ENCODE measurements at regions of chr3 and their contacts with region 1.

Region 1: DNA sequence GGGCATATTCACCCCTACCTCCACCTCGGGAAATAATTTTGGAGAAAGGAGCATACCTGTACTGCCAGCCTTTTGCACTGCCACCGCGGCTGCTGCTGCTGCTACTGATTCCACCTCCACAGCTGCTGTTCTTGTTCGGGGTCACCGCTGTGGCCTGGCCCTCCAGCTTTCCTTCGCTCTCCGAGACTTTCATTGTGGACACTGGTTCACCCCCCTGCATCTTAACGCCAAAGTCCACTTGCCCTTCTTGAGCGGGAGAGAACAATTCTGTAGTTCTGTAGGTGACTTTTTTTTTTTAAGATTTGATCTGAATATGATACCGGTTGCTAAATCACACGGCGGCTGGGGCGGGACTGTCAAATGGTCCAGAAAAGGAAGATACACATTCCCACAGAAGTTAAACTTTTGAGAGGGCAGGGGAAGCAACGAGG is 701 bp downstream of the OSBPL11 start:
- DNase-seq: peak in 1 of 2 experiments; percentile 42
- H3K4me3 ChIP-seq: peak overlapping the region; percentile 83
- H3K27ac ChIP-seq: peak overlapping the region; percentile 85
- H3K4me1 ChIP-seq: peaks cover 38% of the 10 kb centered on the region; the same call in 1 of the 2 replicates
- H3K27me3 ChIP-seq: no peaks in the 10 kb centered on the region
- CTCF ChIP-seq: no peak

Region 2: DNA sequence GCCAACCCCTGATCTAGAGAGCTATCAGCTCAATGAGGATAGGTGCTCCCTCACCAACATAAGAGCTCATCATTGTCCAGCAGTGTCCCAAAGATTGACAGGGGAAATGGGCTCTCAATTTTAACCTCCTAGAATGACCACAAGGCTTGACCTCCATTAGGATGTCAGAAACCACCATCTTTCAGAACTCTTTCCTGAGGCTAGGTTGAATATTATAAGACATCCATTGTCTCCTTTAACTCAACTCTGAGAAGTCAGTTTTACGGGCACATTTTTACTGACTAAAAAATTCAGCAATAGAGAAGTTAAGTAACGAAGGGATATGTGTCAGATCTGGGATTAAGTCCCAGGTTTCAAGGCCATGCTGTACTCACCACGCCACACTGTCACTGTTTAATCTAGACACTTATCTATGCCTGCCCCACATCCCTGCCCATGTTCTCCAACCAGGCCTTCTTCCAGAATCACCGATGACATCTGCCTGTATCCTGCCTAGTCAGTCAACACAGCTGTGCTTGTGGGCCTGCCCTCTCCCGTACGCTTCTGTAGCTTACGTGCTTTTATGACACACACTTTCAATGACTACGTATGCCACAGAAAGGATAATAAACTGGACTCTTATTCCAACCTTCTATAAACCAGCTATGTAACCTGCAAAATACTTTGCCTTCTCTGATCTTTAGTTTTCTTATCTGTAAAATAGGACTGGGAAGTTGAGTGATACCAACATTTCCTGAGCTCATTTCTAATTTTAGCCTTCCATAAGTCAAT is 642.9 kb before region 1 on chr3:
- CTCF ChIA-PET with region 1: no interaction called
- POLR2A ChIA-PET with region 1: interaction called, 12 read pairs
- intact Hi-C with region 1: no loop called
- DNase-seq: no peak
- H3K4me3 ChIP-seq: no peak overlapping the region
- H3K27ac ChIP-seq: no peak overlapping the region
- H3K4me1 ChIP-seq: no peaks in the 10 kb centered on the region
- H3K27me3 ChIP-seq: no peaks in the 10 kb centered on the region
- CTCF ChIP-seq: no peak

Region 3: DNA sequence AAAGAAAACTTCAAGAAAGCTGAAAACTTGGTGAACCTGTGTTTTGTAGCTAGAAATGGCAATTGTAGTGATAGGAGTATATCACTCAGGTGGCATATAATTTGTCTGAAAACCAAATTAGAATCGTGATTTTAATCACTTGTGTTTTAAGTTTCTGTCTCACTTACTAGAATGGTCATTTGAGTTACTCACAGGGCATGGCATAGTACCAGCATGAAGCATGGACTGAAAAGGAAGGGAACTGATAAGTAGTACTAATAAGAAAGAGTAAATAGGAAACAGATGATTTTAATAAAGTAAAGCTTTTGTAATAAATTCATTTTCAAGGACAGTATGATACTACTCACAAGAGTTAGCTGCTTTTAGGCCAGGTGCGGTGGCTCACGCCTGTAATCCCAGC is 21.4 kb before region 1 on chr3:
- CTCF ChIA-PET with region 1: interaction called, 12 read pairs
- POLR2A ChIA-PET with region 1: no interaction called
- intact Hi-C with region 1: no loop called
- DNase-seq: no peak
- H3K4me3 ChIP-seq: no peak overlapping the region
- H3K27ac ChIP-seq: no peak overlapping the region
- H3K4me1 ChIP-seq: no peaks in the 10 kb centered on the region
- H3K27me3 ChIP-seq: no peaks in the 10 kb centered on the region
- CTCF ChIP-seq: no peak

Region 4: GRCh38 chr3:125651244-125651643 is 56.6 kb after region 1 on chr3:
- CTCF ChIA-PET with region 1: interaction called, 12 read pairs
- POLR2A ChIA-PET with region 1: interaction called, 22 read pairs
- intact Hi-C with region 1: loop called (anchors 1 kb)
- DNase-seq: peak in 1 of 2 experiments; percentile 66
- H3K4me3 ChIP-seq: no peak overlapping the region
- H3K27ac ChIP-seq: peak overlapping the region; percentile 52
- H3K4me1 ChIP-seq: peaks cover 42% of the 10 kb centered on the region
- H3K27me3 ChIP-seq: no peaks in the 10 kb centered on the region
- CTCF ChIP-seq: no peak

Region 5: DNA sequence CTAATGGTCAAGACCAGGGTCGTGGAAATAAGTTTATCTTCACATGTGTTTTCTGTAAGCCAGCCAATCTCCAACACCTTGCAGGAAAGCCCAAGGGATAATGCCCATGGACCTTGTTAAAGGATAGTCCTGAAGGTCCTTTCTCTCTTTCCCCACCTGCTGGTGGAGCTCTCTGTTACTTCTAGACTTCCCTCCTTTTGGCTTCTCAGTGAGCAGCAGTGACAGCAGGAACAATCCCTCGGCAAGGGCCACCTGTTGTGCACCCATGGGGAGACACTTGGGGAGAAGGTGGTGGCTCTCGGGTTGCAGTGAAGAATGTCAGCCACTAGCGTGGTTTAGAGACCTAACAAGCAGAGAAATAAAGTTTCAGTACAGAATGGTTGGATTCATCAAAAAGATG is 84.7 kb after region 1 on chr3:
- CTCF ChIA-PET with region 1: interaction called, 3 read pairs
- POLR2A ChIA-PET with region 1: interaction called, 18 read pairs
- intact Hi-C with region 1: no loop called
- DNase-seq: no peak
- H3K4me3 ChIP-seq: no peak overlapping the region
- H3K27ac ChIP-seq: no peak overlapping the region
- H3K4me1 ChIP-seq: no peaks in the 10 kb centered on the region
- H3K27me3 ChIP-seq: no peaks in the 10 kb centered on the region
- CTCF ChIP-seq: peak; percentile 41; the same call in 1 of the 2 replicates

Region 6: DNA sequence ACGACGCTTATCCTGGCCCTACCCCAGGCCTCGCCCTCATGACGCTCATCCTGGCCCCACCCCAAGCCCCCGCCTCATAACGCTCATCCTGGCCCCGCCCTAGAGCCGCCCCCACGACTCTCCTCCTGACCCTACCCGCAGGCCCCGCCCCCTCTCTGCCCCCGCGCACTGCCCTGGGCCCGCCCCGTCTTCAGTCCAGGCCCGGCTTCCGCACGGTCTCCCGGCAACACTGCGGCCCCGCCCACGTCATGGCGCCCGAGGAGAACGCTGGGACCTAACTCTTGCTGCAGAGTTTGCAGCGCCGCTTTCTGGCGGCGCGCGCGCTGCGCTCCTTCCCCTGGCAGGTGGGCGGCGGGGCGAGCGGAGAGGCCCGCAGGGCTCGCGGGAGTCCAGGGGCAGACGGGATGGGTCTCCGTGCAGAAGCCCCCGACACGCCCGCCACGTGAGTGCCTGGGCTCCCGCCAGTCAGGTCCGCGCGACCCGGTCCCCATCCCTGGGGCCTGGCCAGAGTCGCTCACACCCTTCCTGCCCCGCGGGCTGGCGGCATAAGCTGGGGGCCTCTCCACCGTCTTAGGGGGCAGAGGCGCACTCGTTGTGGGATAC is 321.9 kb after region 1 on chr3:
- CTCF ChIA-PET with region 1: interaction called, 4 read pairs
- POLR2A ChIA-PET with region 1: no interaction called
- intact Hi-C with region 1: loop called (anchors 1 kb)
- DNase-seq: peak; percentile 88 to 99
- H3K4me3 ChIP-seq: peak overlapping the region; percentile 85
- H3K27ac ChIP-seq: peak overlapping the region; percentile 65
- H3K4me1 ChIP-seq: peaks cover 41% of the 10 kb centered on the region
- H3K27me3 ChIP-seq: no peaks in the 10 kb centered on the region
- CTCF ChIP-seq: no peak; the same call in 1 of the 2 replicates

Region 7: DNA sequence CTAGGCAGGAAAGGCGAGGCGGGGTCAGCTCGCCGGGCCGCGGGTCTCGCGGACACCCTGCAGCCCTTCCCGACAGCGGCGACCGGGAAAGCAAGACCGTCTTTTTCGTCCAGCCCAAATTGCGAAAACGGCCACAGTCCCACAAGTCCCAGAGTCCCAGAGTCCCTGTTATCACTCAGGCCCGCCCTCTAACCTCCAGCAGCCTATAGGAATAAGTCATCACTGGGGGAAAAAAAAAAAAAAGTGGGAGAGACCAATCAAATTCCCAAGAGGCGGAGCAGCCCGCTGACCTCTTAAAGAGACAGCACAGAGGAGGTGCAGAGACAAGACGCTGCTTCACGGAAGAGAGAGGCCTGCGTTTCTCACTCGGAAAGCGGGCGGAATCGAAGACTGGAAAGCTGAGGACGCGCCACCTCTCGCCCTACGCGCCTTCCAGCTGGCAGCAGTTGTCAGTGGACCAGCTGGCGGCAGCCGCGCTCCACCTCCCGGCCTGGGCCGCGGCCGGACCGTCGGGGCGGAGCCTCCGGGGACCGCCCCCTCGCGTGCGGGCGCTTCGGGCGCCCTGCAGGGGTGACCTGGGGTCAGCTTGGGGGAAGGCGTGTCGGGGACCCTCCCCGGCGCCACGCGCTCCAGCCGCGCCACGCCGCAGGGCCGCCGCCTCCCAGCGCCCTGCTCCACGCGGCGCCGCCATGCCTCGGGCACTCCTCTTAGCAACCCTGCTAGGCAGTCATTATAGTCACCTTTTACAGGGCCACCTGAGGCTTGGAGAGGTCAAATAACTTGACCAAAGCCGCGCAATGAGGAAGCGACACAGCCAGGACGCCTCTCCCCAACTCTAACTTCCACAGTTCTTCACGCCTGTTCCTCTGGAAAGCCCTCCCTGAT is 1996.2 kb after region 1 on chr3 and contains the start of gene TPRA1:
- CTCF ChIA-PET with region 1: no interaction called
- POLR2A ChIA-PET with region 1: interaction called, 20 read pairs
- intact Hi-C with region 1: no loop called
- DNase-seq: peak; percentile 94 to 96
- H3K4me3 ChIP-seq: peak within 1 kb of the TSS; percentile 70
- H3K27ac ChIP-seq: peak within 1 kb of the TSS; percentile 92
- H3K4me1 ChIP-seq: peaks cover 22% of the 10 kb centered on the region
- H3K27me3 ChIP-seq: no peaks in the 10 kb centered on the region
- CTCF ChIP-seq: no peak
- total RNA-seq, gene TPRA1: 58.5 and 66.5 TPM in 2 replicates